Endothelial cell of umbilical vein (primary cell): ENCODE measurements at regions of chr22 and their contacts with region 1.

Region 1: GRCh38 chr22:32528984-32529982 is 54.7 kb downstream of the FBXO7 start:
- DNase-seq: peak; percentile 49
- H3K4me3 ChIP-seq: no peak overlapping the region
- H3K27ac ChIP-seq: no peak overlapping the region
- H3K4me1 ChIP-seq: peaks cover 3% of the 10 kb centered on the region
- H3K27me3 ChIP-seq: no peaks in the 10 kb centered on the region
- CTCF ChIP-seq: peak; percentile 79 to 89
- POLR2A ChIP-seq: no peak

Region 2: DNA sequence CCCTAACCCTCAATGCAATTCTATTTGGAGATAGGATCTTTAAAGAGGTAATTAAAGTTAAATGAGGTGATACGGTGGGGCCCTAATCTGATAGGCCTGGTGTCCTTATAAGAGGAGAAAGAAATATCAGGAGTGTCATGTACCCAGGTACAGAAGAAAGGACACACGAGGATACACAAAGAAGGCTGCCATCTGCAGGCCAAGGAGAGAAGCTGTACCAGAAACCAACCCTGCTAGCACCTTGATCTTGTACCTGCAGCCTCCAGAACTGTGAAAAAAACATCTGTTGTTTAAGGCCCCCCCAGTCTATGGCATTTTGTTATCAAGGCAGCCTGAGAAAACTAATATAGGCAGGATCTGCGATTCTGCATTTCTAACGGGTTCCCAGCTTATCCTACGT is 10.4 kb before region 1 on chr22:
- CTCF ChIA-PET with region 1: interaction called, 21 read pairs
- POLR2A ChIA-PET with region 1: no interaction called
- dilution Hi-C with region 1: no loop called
- intact Hi-C with region 1: no loop called
- DNase-seq: no peak
- H3K4me3 ChIP-seq: no peak overlapping the region
- H3K27ac ChIP-seq: no peak overlapping the region
- H3K4me1 ChIP-seq: no peaks in the 10 kb centered on the region
- H3K27me3 ChIP-seq: peaks cover 0 to 2% of the 10 kb centered on the region in 2 experiments
- CTCF ChIP-seq: peak in 1 of 2 donors; percentile 16
- POLR2A ChIP-seq: no peak

Region 3: GRCh38 chr22:32796865-32797573 is 267.7 kb after region 1 on chr22:
- CTCF ChIA-PET with region 1: interaction called, 37 read pairs
- POLR2A ChIA-PET with region 1: no interaction called
- dilution Hi-C with region 1: no loop called
- intact Hi-C with region 1: loop called (anchors 1 kb)
- DNase-seq: no peak
- H3K4me3 ChIP-seq: no peak overlapping the region
- H3K27ac ChIP-seq: no peak overlapping the region
- H3K4me1 ChIP-seq: no peaks in the 10 kb centered on the region
- H3K27me3 ChIP-seq: peaks cover 6 to 7% of the 10 kb centered on the region in 2 experiments
- CTCF ChIP-seq: peak; percentile 45 to 64
- POLR2A ChIP-seq: no peak

Region 4: GRCh38 chr22:32985899-32986765 is 456.8 kb after region 1 on chr22:
- CTCF ChIA-PET with region 1: no interaction called
- POLR2A ChIA-PET with region 1: no interaction called
- dilution Hi-C with region 1: no loop called
- intact Hi-C with region 1: loop called (anchors 1 kb)
- DNase-seq: peak; percentile 8
- H3K4me3 ChIP-seq: no peak overlapping the region
- H3K27ac ChIP-seq: no peak overlapping the region
- H3K4me1 ChIP-seq: no peaks in the 10 kb centered on the region
- H3K27me3 ChIP-seq: no peaks in the 10 kb centered on the region
- CTCF ChIP-seq: peak; percentile 47 to 54
- POLR2A ChIP-seq: no peak

Region 5: DNA sequence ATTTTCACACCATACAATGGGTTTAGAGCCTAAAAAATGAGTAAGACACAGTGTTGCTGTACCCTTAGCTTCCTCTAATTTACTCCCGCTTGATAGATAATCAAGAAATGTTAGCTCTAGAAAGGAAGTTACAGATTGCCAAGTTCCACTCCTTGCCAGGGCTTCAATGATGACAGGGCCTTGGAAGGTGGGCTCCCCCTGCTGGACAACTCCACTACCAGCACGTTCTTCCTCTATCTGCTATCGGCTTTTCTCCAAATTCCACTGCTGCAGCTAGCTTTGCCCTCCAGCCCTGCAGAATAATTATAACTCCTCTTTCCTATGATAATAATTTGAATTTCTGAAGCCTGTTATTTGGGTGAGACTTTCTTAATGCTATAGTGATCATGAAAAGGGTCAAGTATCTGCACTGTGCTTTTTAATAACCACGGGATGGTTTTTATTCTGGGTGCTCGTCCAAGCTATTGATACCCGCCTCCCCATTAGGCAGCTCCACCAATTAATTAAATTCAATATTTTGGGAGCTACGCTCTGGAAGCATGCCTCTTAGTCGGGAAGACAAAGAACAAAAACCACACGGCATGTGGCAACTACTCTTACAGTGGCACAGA is 519.9 kb after region 1 on chr22:
- CTCF ChIA-PET with region 1: interaction called, 25 read pairs
- POLR2A ChIA-PET with region 1: no interaction called
- dilution Hi-C with region 1: no loop called
- intact Hi-C with region 1: loop called (anchors 1 kb)
- DNase-seq: peak; percentile 30
- H3K4me3 ChIP-seq: no peak overlapping the region
- H3K27ac ChIP-seq: no peak overlapping the region
- H3K4me1 ChIP-seq: no peaks in the 10 kb centered on the region
- H3K27me3 ChIP-seq: no peaks in the 10 kb centered on the region
- CTCF ChIP-seq: peak; percentile 78 to 89
- POLR2A ChIP-seq: no peak